ENCODE measurements at regions of chr9 and their contacts with region 1.

Region 1: GRCh38 chr9:37485389-37486219 is at the start of gene POLR1E:
- DNase-seq: peak; percentile 98
- H3K27ac ChIP-seq: peak within 1 kb of the TSS; percentile 79
- CTCF ChIP-seq: no peak

Region 2: GRCh38 chr9:37528652-37529510 is 43.3 kb after region 1 on chr9:
- CTCF ChIA-PET with region 1: no interaction called
- POLR2A ChIA-PET with region 1: no interaction called
- DNase-seq: peak; percentile 42
- H3K27ac ChIP-seq: no peak overlapping the region
- CTCF ChIP-seq: no peak

Region 3: GRCh38 chr9:37852222-37852621 is 366.6 kb after region 1 on chr9:
- CTCF ChIA-PET with region 1: no interaction called
- POLR2A ChIA-PET with region 1: no interaction called
- DNase-seq: no peak
- H3K27ac ChIP-seq: no peak overlapping the region
- CTCF ChIP-seq: no peak

Region 4: GRCh38 chr9:37899041-37899440 is 413.4 kb after region 1 on chr9:
- CTCF ChIA-PET with region 1: no interaction called
- POLR2A ChIA-PET with region 1: interaction called, 10 read pairs
- DNase-seq: no peak
- H3K27ac ChIP-seq: no peak overlapping the region
- CTCF ChIP-seq: no peak